ENCODE measurements at regions of chr14 and their contacts with region 1.

Region 1: GRCh38 chr14:32998433-32998832 is 59.8 kb downstream of the NPAS3 start:
- DNase-seq: no peak
- ATAC-seq: no peak

Region 2: DNA sequence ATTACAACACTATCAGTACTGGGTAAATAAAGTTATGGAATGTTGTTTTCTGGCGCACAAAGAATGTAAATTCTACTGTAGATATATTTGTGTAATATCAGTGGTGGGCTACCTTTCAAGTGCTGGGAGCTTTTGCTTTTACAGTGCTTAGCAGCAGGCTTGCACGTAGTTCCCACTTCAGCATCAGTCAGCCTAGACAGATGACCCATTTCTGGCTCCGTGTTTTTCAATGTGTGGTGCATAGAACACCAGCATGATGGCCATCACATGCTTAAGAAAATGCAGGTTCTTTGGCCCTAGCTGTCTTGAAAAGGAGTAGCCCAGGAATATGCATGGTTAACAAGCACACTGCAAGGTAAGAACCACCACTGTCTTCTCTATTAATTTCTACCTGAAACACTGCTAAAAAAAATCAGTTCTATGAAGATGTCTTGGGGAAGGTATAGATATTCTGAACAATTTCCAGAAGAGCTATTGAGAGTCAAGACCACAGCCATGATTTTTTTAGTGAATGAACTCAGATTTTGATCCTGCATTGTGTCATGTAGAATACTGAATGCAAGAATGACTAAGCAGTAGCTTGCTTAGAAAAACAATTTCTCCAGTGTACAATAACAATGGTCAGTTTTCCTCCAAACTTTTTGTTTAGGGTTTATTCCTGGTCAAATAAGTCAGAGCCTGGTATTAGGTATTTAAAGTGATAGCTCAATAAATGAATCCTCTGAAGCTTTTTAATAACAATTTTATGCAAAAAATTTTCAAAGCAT is 473.6 kb before region 1 on chr14:
- intact Hi-C with region 1: no loop called
- DNase-seq: no peak
- ATAC-seq: no peak

Region 3: DNA sequence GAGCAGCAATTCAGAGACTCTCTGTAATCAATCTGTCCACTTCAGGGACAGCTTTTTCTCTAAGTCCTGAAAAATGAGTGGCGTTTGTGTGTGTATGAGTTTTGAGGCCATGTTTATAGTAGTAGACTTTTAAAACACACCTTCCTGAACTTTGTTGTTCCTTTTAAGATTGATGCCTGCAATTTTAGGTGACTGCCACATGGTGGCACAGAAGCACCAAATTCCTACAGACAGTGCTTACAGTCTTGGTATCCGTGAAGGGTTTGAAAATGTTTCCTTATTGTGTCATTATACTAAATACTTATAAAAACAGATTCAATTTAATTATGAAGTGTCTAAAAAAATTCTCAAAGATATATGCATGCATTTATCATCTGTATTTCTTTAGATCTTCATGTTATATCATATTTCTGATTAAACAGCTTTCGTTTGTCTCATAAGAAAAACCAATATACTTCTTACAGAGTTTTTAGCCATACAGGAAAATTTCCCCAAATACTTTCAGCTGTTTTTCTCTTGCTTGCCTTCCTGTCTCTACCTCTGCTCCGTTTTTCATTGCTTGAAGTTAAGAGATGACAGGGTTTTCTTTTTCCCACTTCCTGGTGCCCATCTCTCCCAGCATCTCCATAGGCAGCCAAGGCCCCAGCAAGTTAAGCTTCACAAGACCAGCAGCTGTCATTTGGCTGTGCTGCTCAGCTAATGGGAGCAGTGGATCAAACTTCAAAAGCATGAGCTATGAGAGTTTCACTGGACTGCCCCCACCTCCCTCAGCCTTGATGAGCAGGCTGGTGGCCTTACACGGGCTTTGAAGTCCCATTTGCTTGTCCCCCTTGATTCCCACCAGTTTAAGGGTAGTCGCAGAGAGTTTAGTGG is 409.7 kb before region 1 on chr14:
- intact Hi-C with region 1: loop called (anchors 5 kb)
- DNase-seq: no peak
- ATAC-seq: no peak